Colonic mucosa (tissue), 4 donors: ENCODE measurements at regions of chr5 and their contacts with region 1.

Region 1: GRCh38 chr5:180315762-180316212 is 23.9 kb upstream of the MAPK9 start:
- DNase-seq: peak; percentile 82
- H3K4me3 ChIP-seq: no peak overlapping the region
- H3K27ac ChIP-seq: no peak overlapping the region
- H3K4me1 ChIP-seq: no peaks in the 10 kb centered on the region
- H3K27me3 ChIP-seq: no peaks in the 10 kb centered on the region
- CTCF ChIP-seq: peak; percentile 96

Region 2: DNA sequence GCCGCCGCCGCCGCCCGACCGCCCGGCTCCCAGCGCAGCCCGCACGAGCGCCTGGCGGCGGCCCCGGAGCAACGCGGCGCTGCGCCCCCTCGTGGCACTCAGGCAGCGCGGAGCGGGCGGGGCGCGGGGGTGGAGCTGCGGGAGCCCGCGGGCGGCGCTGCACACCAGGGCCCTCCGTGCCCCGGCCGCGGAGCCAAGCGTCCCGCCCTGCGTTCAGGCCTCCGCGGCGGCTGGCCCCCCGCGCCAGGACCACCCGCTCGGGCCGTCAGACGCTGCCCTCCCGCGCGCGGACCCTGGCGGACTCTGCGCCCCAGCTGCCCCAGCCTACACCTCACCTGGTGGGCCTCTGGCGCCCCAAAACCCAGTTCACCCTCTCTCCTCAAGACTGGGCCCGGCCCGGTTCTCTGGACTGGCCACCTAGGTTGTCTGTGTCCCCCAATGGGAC is 106.6 kb before region 1 on chr5 and contains the start of gene RASGEF1C:
- intact Hi-C with region 1: loop called (anchors 10 kb)
- DNase-seq: peak; percentile 59
- H3K4me3 ChIP-seq: peak within 1 kb of the TSS; percentile 29
- H3K27ac ChIP-seq: no peak within 1 kb of the TSS
- H3K4me1 ChIP-seq: no peaks in the 10 kb centered on the region
- H3K27me3 ChIP-seq: peaks cover 14% of the 10 kb centered on the region
- CTCF ChIP-seq: no peak
- total RNA-seq, gene RASGEF1C: 0.85 TPM in 1 of 2 donors, not detected in the other

Region 3: GRCh38 chr5:180380856-180381255 is 65.1 kb after region 1 on chr5:
- intact Hi-C with region 1: no loop called
- DNase-seq: no peak
- H3K4me3 ChIP-seq: no peak overlapping the region
- H3K27ac ChIP-seq: no peak overlapping the region
- H3K4me1 ChIP-seq: no peaks in the 10 kb centered on the region
- H3K27me3 ChIP-seq: no peaks in the 10 kb centered on the region
- CTCF ChIP-seq: no peak